ENCODE measurements at regions of chr1 and their contacts with region 1.

Region 1: DNA sequence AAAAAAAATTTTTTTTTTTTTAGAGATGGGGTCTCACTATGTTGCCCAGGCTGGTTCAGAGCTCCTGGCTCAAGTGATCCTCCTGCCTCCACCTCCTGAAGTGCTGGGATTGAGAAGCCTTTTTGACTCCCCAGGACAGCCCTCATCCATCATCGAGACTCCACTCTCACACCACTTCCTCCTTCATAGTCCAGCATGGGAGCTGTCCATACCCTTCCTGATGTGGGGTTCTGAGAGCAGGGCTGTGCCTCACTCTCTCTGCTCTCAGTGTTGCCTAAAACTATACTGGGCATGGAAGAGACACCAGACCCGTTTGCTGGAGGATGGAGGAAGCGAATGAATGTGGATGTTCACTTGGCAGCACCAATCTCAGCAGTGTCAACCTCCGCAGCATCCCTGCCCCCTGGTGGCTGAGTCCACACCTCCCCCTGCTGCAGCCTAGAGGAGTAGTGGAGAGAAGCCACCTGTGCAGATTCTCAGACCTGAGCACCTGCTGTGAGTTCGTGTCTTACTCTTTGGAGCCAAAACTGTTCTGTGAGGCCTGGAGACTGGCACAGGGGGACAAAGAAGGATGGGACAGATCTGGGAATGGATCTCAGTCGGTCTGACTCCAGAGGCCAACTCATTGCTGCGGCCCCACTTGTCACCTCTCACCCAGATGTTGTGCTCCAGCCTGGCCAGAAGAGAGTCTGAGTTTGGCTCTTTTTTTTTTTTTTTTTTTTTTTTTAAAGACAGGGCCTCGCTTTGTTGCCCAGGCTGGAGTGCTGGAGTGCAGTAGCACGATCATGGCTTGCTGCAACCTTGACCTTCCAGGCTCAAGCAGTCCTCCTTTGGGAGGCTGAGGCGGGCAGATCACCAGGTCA is 17.7 kb downstream of the TINAGL1 start:
- DNase-seq: peak; percentile 86
- H3K4me3 ChIP-seq: no peak overlapping the region
- H3K27ac ChIP-seq: no peak overlapping the region
- H3K4me1 ChIP-seq: no peaks in the 10 kb centered on the region
- H3K27me3 ChIP-seq: no peaks in the 10 kb centered on the region
- CTCF ChIP-seq: peak; percentile 61 to 96 (median 90)
- POLR2A ChIP-seq: no peak

Region 2: DNA sequence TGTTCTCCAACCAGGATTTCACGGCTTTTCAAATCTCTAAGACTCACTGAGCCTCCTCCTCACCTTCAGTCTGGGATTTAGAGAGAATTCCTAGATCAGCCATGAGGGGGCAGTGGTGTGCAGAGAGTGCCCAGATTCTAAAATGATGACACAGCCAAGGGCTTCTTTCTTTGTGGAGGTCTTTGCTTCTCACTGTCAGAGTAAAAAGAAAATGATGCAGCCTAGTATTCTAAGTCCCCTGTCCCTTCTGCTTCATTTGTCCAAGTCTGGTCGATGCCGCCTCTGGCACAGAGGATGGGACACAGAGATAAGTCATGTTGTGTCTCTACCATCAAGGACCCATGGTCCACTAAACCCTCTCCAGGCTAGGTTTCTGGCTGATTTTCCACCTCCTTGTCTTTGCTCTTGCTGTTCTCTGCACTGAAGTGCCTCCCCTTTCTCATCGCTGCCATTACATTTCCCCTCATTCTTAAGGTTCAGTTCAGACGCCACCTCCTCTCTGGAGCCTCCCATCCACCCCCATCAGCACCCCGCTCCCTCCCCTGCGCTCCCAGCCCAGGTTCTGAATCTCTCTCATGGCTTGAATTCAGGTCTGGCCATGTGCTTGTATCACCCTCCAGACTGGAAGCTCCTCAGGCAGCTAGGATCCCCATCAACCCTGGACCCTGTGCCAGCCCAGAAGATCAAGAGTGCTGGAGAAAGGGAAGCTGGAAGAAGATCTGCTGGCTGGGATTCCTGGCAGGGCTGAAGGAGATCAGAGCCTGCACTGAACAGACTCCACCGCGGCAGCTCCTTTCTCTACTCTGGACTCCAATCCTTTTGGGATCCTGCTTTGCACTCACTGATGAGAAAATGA is 29.6 kb before region 1 on chr1:
- intact Hi-C with region 1: loop called (anchors 1 kb)
- DNase-seq: peak; percentile 48
- H3K4me3 ChIP-seq: no peak overlapping the region
- H3K27ac ChIP-seq: no peak overlapping the region
- H3K4me1 ChIP-seq: no peaks in the 10 kb centered on the region
- H3K27me3 ChIP-seq: no peaks in the 10 kb centered on the region
- CTCF ChIP-seq: peak; percentile 69 to 90 (median 88)
- POLR2A ChIP-seq: no peak